ENCODE measurements at regions of chr12 and their contacts with region 1.

Region 1: DNA sequence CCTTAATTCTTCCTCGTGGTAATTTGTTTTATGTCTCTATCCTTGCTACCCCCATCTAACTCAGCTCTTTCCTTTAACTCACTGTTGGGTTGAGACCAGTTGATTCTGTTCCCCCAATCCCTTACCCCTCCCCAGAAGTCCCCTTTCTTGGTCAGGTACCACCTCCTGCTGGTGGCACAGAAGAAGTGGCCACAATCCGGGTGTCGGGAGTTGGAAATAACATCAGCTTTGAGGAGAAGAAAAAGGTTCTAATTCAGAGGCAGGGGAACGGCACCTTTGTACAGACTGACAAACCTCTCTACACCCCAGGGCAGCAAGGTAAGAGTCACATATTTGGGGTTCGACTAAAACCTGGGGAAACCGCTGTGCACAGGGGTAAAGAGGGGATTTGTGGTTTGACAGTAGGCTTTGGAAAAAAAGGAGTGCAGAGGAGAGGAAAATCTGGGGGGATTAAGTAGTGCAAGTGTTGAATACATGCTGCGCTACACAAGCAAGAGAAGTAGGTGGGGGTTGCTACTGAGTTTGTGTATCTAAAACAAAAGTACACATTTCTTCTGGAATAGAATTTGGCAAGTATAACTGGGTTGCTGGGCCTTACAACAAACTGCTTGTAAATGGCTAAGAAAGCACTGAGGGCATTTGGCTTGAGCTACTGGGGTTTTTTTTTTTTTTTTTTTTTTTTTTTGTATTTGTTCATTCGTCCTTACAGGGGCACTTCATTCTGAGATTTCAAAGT is 1.3 kb downstream of the A2ML1 start:
- DNase-seq: peak; percentile 79
- ATAC-seq: peak; percentile 65
- H3K4me3 Mint-ChIP-seq: peak overlapping the region; percentile 64
- H3K27ac Mint-ChIP-seq: peak overlapping the region; percentile 90
- H3K4me1 Mint-ChIP-seq: peaks cover 60% of the 10 kb centered on the region
- H3K27me3 Mint-ChIP-seq: no peaks in the 10 kb centered on the region; the same call in 1 of the 2 replicates
- CTCF ChIP-seq: peak; percentile 76

Region 2: DNA sequence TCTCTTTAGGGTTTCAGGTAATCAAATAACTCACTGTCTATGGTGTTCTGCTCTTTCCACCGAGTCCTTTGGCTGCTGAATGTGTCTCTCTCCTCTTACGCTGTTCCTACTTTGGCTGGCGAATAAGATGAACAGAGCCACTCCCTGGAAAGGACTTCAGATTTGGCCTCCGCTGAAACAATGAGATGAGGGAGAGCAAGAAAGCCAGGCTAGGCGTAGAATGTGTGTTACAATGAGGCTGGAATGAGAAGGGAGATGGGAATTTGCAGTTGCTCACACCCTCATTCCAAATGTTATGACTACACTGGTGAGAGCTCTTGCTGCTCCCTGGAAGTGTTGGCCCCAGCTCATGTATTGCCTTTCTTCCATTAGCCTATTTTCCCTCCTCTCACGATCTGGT is 161.1 kb before region 1 on chr12 and contains the start of gene MFAP5:
- CTCF ChIA-PET with region 1: interaction called, 41 read pairs
- POLR2A ChIA-PET with region 1: interaction called, 10 read pairs
- DNase-seq: no peak
- ATAC-seq: peak; percentile 29; the same call in 1 of the 2 replicates
- H3K4me3 Mint-ChIP-seq: no peak within 1 kb of the TSS
- H3K27ac Mint-ChIP-seq: no peak within 1 kb of the TSS
- H3K4me1 Mint-ChIP-seq: peaks cover 5% of the 10 kb centered on the region
- H3K27me3 Mint-ChIP-seq: no peaks in the 10 kb centered on the region
- CTCF ChIP-seq: no peak
- total RNA-seq, gene MFAP5: 0.69 to 0.96 TPM in 2 of 3 replicates, not detected in the other

Region 3: DNA sequence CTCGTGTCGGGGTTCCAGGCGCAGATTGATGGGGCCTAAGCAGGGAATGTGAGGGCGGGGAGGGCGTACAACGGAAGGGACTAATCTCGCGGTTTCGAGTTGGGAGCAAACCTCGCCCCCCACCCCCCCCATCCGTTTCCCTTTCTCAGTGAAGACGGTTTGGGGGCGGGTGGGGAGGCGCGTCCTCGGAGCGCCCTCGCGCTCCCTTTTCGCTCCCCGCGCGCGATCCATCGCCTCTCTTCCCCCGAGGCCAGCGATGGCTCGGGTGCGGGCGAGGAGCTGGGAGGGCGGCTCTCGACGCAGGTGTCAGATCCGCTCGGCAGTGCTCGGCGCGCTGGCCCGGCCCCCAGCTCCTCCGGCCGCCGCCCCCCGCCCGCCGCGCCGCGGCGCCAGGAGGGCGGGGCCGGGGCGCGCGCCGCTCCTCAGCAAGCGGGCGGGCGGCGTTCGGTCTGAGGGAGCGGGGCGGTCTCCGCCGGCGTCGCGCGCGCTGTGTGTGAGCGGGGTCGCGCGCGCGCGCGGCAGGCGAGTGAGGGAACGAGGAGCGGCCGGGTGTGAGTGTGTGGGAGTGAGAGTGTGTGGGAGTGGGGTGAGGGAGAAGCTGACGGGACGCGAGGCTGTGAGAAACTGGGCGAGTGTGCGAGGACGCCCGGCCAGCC is 126.1 kb before region 1 on chr12 and contains the start of gene RIMKLB:
- CTCF ChIA-PET with region 1: interaction called, 13 read pairs
- POLR2A ChIA-PET with region 1: interaction called, 8 read pairs
- DNase-seq: peak; percentile 71
- ATAC-seq: peak; percentile 81
- H3K4me3 Mint-ChIP-seq: peak within 1 kb of the TSS; percentile 79
- H3K27ac Mint-ChIP-seq: peak within 1 kb of the TSS; percentile 95
- H3K4me1 Mint-ChIP-seq: peaks cover 57% of the 10 kb centered on the region
- H3K27me3 Mint-ChIP-seq: no peaks in the 10 kb centered on the region
- CTCF ChIP-seq: no peak
- total RNA-seq, gene RIMKLB: 106 to 109 TPM (median 107 TPM) in 3 replicates

Region 4: GRCh38 chr12:8796831-8797626 is 26.7 kb before region 1 on chr12:
- CTCF ChIA-PET with region 1: interaction called, 14 read pairs
- POLR2A ChIA-PET with region 1: interaction called, 8 read pairs
- DNase-seq: no peak
- ATAC-seq: peak; percentile 49
- H3K4me3 Mint-ChIP-seq: no peak overlapping the region
- H3K27ac Mint-ChIP-seq: peak overlapping the region; percentile 83
- H3K4me1 Mint-ChIP-seq: peaks cover 24% of the 10 kb centered on the region
- H3K27me3 Mint-ChIP-seq: peaks cover 7% of the 10 kb centered on the region; the same call in 1 of the 2 replicates
- CTCF ChIP-seq: no peak

Region 5: DNA sequence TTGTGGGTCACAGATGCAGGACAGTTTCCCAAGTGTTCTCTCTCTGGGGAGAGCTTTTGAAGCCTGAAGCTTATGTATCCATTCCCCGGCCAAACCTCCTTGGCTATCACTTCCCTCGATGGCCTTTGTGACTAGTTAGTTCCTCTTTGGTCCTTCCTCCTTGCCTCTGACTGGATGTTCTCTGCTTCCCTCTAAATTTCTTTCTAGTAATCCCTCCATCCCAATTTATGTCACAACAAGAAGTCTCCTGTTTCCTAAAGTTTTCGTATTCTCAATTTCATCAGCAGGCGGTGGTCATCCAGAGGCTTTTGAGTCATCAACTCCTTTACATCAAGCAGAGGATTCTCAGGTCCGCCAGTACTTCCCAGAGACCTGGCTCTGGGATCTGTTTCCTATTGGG is 26.1 kb after region 1 on chr12:
- CTCF ChIA-PET with region 1: no interaction called
- POLR2A ChIA-PET with region 1: no interaction called
- DNase-seq: no peak
- ATAC-seq: no peak
- H3K4me3 Mint-ChIP-seq: no peak overlapping the region
- H3K27ac Mint-ChIP-seq: no peak overlapping the region
- H3K4me1 Mint-ChIP-seq: no peaks in the 10 kb centered on the region
- H3K27me3 Mint-ChIP-seq: no peaks in the 10 kb centered on the region
- CTCF ChIP-seq: no peak

Region 6: DNA sequence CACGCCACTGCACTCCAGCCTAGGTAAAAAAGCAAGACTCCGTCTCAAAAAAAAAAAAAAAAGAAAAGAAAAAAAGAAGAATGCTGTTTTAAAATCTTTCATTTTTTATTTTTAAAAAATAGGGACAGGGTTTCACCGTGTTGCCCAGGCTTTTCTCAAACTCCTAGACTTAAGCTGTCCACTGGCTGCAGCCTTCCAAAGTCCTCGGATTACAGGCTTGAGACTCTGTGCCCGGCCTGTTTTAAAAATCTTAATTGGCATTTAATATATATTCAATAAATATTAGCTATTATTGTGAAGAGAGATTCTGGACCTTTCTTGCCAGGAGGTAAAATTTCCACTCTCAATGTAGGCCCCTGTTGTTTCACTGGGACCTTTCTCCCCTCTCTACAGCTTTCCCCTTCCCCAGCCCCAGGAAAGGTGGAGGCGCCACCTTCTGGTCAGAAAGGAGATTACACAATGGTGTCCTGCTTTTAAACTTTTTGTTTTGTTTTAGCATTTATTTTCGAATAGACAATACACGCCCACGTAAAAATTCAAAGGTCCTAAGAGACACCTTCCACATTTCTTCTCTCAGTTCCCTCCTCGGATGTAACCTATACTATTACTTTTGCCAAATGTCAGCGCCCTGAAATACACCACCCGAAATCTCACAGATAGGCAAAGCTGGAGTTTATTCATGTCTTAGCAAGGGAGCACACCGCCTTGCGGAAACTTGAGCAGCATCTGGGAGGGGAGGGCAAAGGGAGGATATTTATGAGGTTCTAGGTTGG is 66.8 kb after region 1 on chr12:
- CTCF ChIA-PET with region 1: interaction called, 32 read pairs
- POLR2A ChIA-PET with region 1: interaction called, 3 read pairs
- DNase-seq: peak; percentile 72
- ATAC-seq: peak; percentile 95
- H3K4me3 Mint-ChIP-seq: peak overlapping the region; percentile 68
- H3K27ac Mint-ChIP-seq: peak overlapping the region; percentile 68
- H3K4me1 Mint-ChIP-seq: peaks cover 20% of the 10 kb centered on the region
- H3K27me3 Mint-ChIP-seq: no peaks in the 10 kb centered on the region
- CTCF ChIP-seq: peak; percentile 87

Region 7: DNA sequence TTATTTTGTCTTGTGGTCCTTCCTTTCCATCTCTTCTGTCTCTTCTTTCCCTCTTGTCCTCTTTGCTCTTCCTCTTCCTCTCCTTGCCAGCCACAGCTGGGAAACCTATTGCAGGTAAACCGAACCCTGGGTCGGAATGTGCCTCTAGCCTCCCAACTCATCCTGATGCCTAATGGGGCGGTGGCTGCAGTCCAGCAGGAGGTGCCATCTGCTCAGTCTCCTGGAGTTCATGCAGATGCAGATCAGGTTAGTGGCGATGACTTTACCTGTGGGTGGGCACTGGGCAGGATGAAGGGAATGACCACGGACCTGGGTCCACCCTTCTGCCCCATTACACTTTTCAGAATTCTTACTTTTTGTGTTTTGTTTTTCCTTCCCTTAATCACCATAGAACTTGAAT is 98.8 kb after region 1 on chr12:
- CTCF ChIA-PET with region 1: no interaction called
- POLR2A ChIA-PET with region 1: no interaction called
- DNase-seq: no peak
- ATAC-seq: peak; percentile 39; the same call in 1 of the 2 replicates
- H3K4me3 Mint-ChIP-seq: no peak overlapping the region
- H3K27ac Mint-ChIP-seq: peak overlapping the region; percentile 87
- H3K4me1 Mint-ChIP-seq: peaks cover 41% of the 10 kb centered on the region
- H3K27me3 Mint-ChIP-seq: no peaks in the 10 kb centered on the region
- CTCF ChIP-seq: no peak

Measured in WTC11 (cell line).